Stomach (tissue), 19 donors: ENCODE measurements at regions of chr18 and their contacts with region 1.

Region 1: DNA sequence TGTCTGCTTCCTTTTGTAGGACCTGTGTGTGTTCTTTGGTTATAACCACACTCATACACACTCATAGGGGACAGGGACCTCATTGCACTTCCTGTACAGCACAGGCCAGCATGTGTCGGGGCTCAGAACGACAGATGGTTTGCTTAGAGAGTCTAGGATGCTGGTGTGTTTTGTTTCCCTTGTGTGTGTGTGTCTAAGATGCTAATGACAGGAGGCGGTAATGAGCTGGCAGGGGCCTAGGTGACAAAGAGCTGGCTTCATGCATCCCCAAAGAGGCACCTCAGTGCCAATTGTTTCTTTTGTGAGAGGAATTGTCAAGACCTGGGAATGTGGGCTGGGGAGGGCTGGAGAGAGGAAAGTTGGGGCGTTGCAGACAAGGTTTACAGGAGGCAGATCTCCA is 66.6 kb downstream of the CELF4 start:
- DNase-seq: peak in 1 of 2 donors; percentile 37
- H3K4me3 ChIP-seq: no peak overlapping the region
- H3K27ac ChIP-seq: no peak overlapping the region
- H3K4me1 ChIP-seq: no peaks in the 10 kb centered on the region
- H3K27me3 ChIP-seq: peaks cover 0 to 3% (median 0%) of the 10 kb centered on the region in 3 donors
- CTCF ChIP-seq: no peak
- EP300 ChIP-seq: no peak
- POLR2A ChIP-seq: no peak

Region 2: DNA sequence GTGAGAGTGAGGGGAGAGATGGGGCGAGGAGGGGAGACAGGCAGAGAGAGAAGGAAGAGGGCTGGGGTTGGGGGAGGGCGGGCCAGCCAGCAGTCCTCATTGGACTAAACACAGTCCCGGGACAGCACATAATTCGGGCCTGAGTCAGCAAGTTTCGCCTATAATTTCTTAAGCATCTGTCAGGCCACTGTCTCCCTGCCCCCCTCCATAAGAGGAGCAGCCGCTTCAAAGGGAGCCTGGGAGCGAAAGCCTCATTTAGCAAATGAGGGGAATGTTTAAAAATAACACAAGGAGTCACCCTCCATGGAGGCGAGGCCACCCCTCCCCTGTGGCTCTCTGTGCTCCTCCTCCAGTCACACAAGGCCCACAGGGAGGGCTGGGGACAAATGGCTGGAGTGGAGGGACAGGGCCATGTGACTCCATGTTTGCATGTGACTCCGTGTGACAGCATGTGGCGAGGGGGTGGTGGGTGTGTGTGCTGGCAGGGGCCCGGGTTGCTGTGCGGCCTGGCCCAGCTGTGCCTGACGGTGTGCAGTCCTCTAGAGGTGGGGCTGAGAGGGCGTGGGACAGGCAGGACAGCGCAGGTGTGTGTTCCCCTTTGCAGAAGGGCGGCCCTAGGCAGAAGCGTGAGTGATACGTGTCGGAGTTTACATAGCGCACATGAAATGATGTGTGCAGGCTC is 95.8 kb before region 1 on chr18:
- intact Hi-C with region 1: no loop called
- DNase-seq: peak in 1 of 2 donors; percentile 80
- H3K4me3 ChIP-seq: no peak overlapping the region
- H3K27ac ChIP-seq: no peak overlapping the region
- H3K4me1 ChIP-seq: peaks cover 0 to 10% (median 4%) of the 10 kb centered on the region in 4 donors
- H3K27me3 ChIP-seq: no peaks in the 10 kb centered on the region
- CTCF ChIP-seq: no peak
- EP300 ChIP-seq: no peak
- POLR2A ChIP-seq: no peak

Region 3: GRCh38 chr18:37435996-37436395 is 63.0 kb before region 1 on chr18:
- intact Hi-C with region 1: loop called (anchors 10 kb)
- DNase-seq: no peak
- H3K4me3 ChIP-seq: no peak overlapping the region
- H3K27ac ChIP-seq: no peak overlapping the region
- H3K4me1 ChIP-seq: no peaks in the 10 kb centered on the region
- H3K27me3 ChIP-seq: peaks cover 0 to 20% (median 6%) of the 10 kb centered on the region in 3 donors
- CTCF ChIP-seq: no peak
- EP300 ChIP-seq: no peak
- POLR2A ChIP-seq: no peak